Tibial artery (tissue), 4 donors: ENCODE measurements at regions of chr6 and their contacts with region 1.

Region 1: GRCh38 chr6:30717042-30717844 is at the start of gene MDC1:
- DNase-seq: peak; percentile 99 to 100
- H3K4me3 ChIP-seq: peak within 1 kb of the TSS; percentile 61 to 67
- H3K27ac ChIP-seq: peak within 1 kb of the TSS; percentile 89 to 95
- H3K4me1 ChIP-seq: peaks cover 0 to 31% (median 22%) of the 10 kb centered on the region in 4 donors
- H3K27me3 ChIP-seq: no peaks in the 10 kb centered on the region
- CTCF ChIP-seq: peak; percentile 43 to 47

Region 2: DNA sequence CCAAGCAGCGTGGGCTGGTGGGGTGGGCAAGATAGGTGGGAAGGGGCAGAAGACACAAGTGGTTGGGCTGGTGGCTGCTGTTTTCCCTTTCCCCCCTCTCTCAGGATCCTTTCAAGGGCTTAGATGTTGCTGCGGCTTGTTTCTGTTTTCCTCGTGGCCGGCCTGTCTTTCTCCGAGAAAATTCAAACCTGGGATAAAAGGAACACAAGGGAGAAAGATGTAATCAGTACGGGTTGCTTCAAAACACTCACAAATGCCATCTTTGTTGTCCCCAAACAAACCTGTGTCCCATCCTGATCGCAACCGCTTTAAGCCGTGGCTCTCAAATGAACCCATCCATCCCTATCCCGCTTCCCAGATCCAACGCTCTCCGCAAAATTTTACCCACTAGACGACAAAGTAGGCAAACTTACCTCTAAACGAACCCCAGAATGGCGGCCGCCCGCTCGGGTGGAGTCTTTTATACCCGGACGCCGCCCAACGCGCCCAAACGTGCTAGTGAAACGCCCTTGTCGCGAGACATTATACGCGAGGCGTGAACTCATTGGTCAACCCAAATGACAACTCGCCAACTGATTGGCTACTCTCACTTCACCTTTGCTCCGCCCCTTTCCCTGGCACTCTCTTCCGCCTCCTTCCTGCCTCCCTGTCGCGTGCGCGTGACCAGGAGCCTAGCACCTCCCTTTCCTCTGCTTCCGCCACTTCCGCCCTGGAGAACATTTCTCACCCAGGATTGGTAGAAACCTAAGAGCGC is 100.3 kb before region 1 on chr6 and contains the start of gene PPP1R10:
- intact Hi-C with region 1: loop called (anchors 5 kb)
- DNase-seq: peak; percentile 99 to 100
- H3K4me3 ChIP-seq: peak within 1 kb of the TSS; percentile 87 to 90
- H3K27ac ChIP-seq: peak within 1 kb of the TSS; percentile 96 to 98
- H3K4me1 ChIP-seq: peaks cover 0 to 38% (median 30%) of the 10 kb centered on the region in 4 donors
- H3K27me3 ChIP-seq: no peaks in the 10 kb centered on the region
- CTCF ChIP-seq: no peak

Region 3: GRCh38 chr6:30678964-30679726 is 38.1 kb before region 1 on chr6:
- intact Hi-C with region 1: loop called (anchors 1 kb)
- DNase-seq: peak; percentile 82 to 92
- H3K4me3 ChIP-seq: peak overlapping the region; percentile 15 to 64
- H3K27ac ChIP-seq: peak overlapping the region; percentile 94 to 100
- H3K4me1 ChIP-seq: peaks cover 4 to 54% (median 46%) of the 10 kb centered on the region in 4 donors
- H3K27me3 ChIP-seq: no peaks in the 10 kb centered on the region
- CTCF ChIP-seq: peak; percentile 96

Region 4: GRCh38 chr6:30690403-30691207 is 26.6 kb before region 1 on chr6 and contains the start of gene NRM:
- intact Hi-C with region 1: loop called (anchors 2 kb)
- DNase-seq: peak; percentile 89 to 94
- H3K4me3 ChIP-seq: peak within 1 kb of the TSS; percentile 61 to 69
- H3K27ac ChIP-seq: peak within 1 kb of the TSS; percentile 94 to 100
- H3K4me1 ChIP-seq: peaks cover 0 to 54% (median 39%) of the 10 kb centered on the region in 4 donors
- H3K27me3 ChIP-seq: no peaks in the 10 kb centered on the region
- CTCF ChIP-seq: no peak

Region 5: GRCh38 chr6:30793521-30794194 is 76.4 kb after region 1 on chr6:
- intact Hi-C with region 1: no loop called
- DNase-seq: no peak
- H3K4me3 ChIP-seq: no peak overlapping the region
- H3K27ac ChIP-seq: peak overlapping the region; percentile 51 to 63
- H3K4me1 ChIP-seq: peaks cover 0 to 14% (median 0%) of the 10 kb centered on the region in 4 donors
- H3K27me3 ChIP-seq: no peaks in the 10 kb centered on the region
- CTCF ChIP-seq: no peak